SK-N-SH (cell line): ENCODE measurements at regions of chr9 and their contacts with region 1.

Region 1: GRCh38 chr9:136949817-136950655 is 2.0 kb upstream of the LCN12 start:
- DNase-seq: peak; percentile 100
- H3K4me3 ChIP-seq: peak overlapping the region; percentile 62 to 67
- H3K27ac ChIP-seq: peak overlapping the region in 1 of 2 experiments; percentile 94; a peak in 2 of 4 replicates
- H3K4me1 ChIP-seq: peaks cover 0 to 30% of the 10 kb centered on the region in 2 experiments; a peak in 2 of 4 replicates
- H3K27me3 ChIP-seq: no peaks in the 10 kb centered on the region
- CTCF ChIP-seq: no peak
- EP300 ChIP-seq: no peak
- RAD21 ChIP-seq: no peak

Region 2: GRCh38 chr9:136975644-136976043 is 25.6 kb after region 1 on chr9:
- CTCF ChIA-PET with region 1: interaction called, 24 read pairs
- POLR2A ChIA-PET with region 1: interaction called, 4 read pairs
- DNase-seq: no peak
- H3K4me3 ChIP-seq: no peak overlapping the region
- H3K27ac ChIP-seq: no peak overlapping the region
- H3K4me1 ChIP-seq: peaks cover 0 to 25% of the 10 kb centered on the region in 2 experiments; a peak in 1 of 4 replicates
- H3K27me3 ChIP-seq: no peaks in the 10 kb centered on the region
- CTCF ChIP-seq: peak; percentile 21
- EP300 ChIP-seq: no peak
- RAD21 ChIP-seq: no peak

Region 3: GRCh38 chr9:137000177-137000883 is 50.3 kb after region 1 on chr9:
- CTCF ChIA-PET with region 1: interaction called, 11 read pairs
- POLR2A ChIA-PET with region 1: interaction called, 3 read pairs
- DNase-seq: no peak
- H3K4me3 ChIP-seq: no peak overlapping the region
- H3K27ac ChIP-seq: no peak overlapping the region
- H3K4me1 ChIP-seq: peaks cover 9 to 13% of the 10 kb centered on the region in 2 experiments; a peak in 3 of 4 replicates
- H3K27me3 ChIP-seq: no peaks in the 10 kb centered on the region
- CTCF ChIP-seq: no peak
- EP300 ChIP-seq: no peak
- RAD21 ChIP-seq: no peak

Region 4: DNA sequence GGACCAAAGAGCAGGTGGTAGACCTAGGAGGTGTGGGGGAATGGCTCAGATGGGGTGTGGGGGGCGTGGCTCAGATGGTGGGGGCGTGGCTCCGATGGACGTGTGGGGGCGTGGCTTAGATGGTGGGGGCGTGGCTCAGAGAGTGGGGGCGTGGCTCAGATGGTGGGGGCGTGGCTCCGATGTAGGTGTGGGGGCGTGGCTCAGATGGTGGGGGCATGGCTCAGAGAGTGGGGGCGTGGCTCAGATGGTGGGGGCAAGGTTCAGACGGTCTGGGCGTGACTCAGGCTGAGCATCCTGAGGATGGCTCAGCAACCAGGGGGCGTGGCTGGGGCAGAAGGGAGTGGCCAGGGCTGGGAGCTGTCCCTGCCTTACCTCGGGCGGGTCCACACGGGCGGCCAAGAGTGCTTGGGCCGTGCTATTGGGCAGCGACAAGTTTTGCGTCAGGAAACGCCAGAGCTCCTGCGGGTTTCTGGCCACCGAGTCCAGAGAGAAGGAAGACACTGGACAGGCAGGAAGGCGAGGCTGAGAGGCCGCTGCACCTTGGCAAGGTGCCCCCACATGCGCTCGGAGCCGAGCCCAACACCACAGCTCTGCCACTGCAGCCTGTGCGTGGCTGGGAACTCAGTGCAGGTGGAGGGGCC is 72.1 kb after region 1 on chr9:
- CTCF ChIA-PET with region 1: interaction called, 350 read pairs
- POLR2A ChIA-PET with region 1: interaction called, 7 read pairs
- DNase-seq: peak; percentile 90
- H3K4me3 ChIP-seq: no peak overlapping the region
- H3K27ac ChIP-seq: no peak overlapping the region
- H3K4me1 ChIP-seq: peaks cover 0 to 23% of the 10 kb centered on the region in 2 experiments; a peak in 1 of 4 replicates
- H3K27me3 ChIP-seq: no peaks in the 10 kb centered on the region
- CTCF ChIP-seq: no peak
- EP300 ChIP-seq: no peak
- RAD21 ChIP-seq: no peak

Region 5: DNA sequence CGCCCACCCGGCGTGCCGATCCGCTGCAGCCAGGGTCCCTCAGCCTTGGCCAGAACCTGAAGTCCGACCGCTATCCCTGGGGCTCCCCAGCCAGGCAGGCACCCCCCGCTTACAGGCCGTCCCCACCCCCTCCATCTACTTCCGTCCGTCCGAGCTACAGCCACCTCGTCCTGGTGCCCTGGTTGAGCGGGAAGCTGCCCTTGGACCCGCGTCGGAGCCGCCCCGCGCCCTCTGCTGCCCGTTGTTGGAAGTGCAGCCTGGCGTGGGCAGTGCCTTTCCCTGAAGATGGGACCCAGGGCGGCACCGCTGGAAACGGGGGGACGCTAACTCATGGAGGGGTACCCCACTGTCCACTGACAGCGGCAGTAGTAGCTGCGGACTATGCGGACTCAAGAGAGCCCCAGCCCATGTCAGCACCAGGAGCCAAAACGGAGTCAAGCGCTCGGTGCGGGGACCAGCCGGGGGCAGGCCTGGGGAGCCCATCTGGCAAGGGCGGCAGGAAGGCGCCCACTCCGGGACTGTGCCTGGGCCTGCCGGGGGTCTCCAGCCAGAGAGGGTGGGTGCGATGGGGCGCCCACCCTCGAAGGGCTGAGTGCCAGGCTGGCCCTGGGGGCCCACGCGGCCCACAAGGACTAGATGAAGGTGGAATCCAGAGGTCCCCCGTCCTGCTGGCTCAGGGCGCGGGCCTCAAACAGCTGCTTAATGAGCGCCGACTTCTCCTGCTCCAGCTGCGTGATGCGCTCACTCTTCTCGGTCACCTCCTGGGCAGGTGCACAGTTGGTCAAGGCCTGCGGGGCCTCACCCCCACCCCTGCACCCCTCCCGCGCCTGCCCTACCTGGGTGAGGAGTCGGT is 114.2 kb after region 1 on chr9:
- CTCF ChIA-PET with region 1: interaction called, 20 read pairs
- POLR2A ChIA-PET with region 1: no interaction called
- DNase-seq: peak; percentile 89
- H3K4me3 ChIP-seq: no peak overlapping the region; a peak in 1 of 4 replicates
- H3K27ac ChIP-seq: peak overlapping the region in 1 of 2 experiments; percentile 11; a peak in 1 of 4 replicates
- H3K4me1 ChIP-seq: peaks cover 0 to 18% of the 10 kb centered on the region in 2 experiments; a peak in 1 of 4 replicates
- H3K27me3 ChIP-seq: no peaks in the 10 kb centered on the region
- CTCF ChIP-seq: peak; percentile 85
- EP300 ChIP-seq: no peak
- RAD21 ChIP-seq: peak; percentile 74

Region 6: GRCh38 chr9:137070201-137070905 is 120.3 kb after region 1 on chr9 and contains the start of gene SAPCD2:
- CTCF ChIA-PET with region 1: interaction called, 20 read pairs
- POLR2A ChIA-PET with region 1: no interaction called
- DNase-seq: peak; percentile 95
- H3K4me3 ChIP-seq: peak within 1 kb of the TSS; percentile 53 to 57
- H3K27ac ChIP-seq: peak within 1 kb of the TSS in 1 of 2 experiments; percentile 80; a peak in 2 of 4 replicates
- H3K4me1 ChIP-seq: peaks cover 0 to 29% of the 10 kb centered on the region in 2 experiments; a peak in 1 of 4 replicates
- H3K27me3 ChIP-seq: no peaks in the 10 kb centered on the region
- CTCF ChIP-seq: no peak
- EP300 ChIP-seq: no peak
- RAD21 ChIP-seq: no peak
- polyA plus RNA-seq, gene SAPCD2: 4.6 and 6.0 TPM in 2 replicates